Activated T-helper 2 cell treated with anti-CD3 and anti-CD28 coated beads, Interferon-gamma antibody, Interleukin-2, Interleukin-4, amounts not matched to agents 10 μg/mL and 5 μg/mL and 100 μg/mL, durations not matched to agents 14 hours and 24 hours and 36 hours (primary cell): ENCODE measurements at regions of chr12 and their contacts with region 1.

Region 1: DNA sequence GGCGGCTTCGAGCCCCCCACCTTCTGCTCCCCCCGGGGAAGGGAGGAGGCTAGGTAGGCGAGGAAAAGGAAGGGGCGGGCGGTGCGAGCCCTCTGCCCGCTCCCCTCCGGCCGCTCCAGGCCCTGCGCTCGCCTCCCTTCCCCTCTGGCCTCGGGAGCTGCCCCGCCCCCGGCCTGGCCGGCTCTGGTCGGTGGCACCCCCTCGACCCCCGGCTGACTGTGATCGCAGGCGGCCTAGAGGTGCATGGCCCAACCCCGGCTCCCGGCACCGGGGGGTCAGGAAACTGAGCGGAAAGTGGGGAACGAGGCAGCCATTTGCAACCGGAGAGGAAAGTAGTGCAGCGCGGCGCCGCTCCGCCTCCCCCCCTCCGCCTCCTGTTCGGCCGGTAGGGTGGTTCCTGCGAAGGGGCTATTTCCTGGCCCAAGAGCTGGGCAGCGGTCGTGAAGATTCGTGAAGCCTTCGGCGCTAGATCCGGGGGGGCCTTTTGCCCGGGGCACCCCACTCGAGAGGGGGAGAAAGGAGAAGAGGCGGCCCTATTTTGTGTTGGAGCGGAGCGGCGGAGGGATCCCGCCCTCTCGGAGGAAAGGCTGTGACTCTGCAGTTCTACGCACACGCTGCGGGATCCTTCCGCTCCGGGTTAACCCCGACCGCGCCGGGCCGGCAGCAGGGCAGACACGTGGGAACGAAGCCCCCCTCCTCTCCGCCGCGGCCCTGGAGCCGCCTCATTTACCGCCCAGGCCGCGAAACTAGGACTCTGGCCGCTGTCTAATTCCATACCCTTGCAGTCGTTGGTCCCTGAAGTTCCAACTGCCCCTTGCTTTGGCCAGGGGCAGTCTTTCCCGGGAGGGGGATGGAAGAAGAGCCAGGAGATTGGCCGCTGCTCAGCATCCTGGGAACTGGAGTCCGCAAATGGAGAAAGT is at the start of gene KMT2D:
- DNase-seq: peak; percentile 89
- H3K4me3 Mint-ChIP-seq: peak within 1 kb of the TSS; percentile 92
- H3K27ac Mint-ChIP-seq: peak within 1 kb of the TSS; percentile 89
- H3K4me1 Mint-ChIP-seq: peaks cover 43% of the 10 kb centered on the region
- H3K27me3 Mint-ChIP-seq: no peaks in the 10 kb centered on the region
- total RNA-seq, gene KMT2D: 93.3 and 100 TPM in 2 replicates

Region 2: DNA sequence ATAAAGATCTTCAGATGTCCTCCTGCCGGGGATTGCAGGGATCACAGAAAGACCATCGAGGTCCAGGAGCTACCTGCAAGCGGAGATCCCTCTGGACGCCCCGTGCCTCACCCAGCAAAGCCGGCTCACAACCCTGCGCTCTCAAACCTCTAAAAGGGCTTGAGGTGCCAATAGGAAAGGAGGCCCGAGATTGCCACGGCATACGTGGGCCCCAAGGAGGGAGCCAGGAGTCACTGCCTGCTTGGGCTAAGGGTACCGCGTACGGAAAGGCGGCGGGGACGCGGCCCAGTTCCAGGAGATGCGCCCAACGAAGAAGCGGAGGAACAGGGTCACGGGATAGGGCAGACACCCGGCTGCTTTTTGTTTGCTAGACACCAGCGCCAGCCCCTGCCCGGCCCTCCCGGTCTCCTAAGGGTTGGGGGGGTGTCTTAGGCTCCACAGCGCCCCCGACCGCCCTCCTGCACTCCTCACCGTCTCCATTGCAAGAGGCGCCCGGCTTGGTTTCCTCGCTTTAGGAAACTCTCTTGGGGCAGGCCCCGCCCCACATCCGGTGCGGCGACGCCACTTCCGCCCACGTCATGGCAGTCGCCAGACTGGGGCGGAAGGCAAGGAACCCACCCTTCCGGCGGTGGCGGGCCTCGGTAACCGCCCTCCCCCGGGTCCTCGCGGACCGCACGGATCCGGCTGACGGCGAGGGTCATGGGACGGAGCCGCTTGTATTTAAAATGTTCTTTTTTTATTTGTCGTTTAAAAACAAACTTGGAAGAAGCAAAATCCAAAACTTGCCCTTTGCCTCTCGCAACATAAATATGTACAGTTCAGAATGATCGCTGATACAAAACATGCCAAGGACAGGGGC is 42.0 kb before region 1 on chr12 and contains the start of gene PRKAG1:
- intact Hi-C with region 1: loop called (anchors 1 kb)
- DNase-seq: peak; percentile 96
- H3K4me3 Mint-ChIP-seq: peak within 1 kb of the TSS; percentile 90
- H3K27ac Mint-ChIP-seq: peak within 1 kb of the TSS; percentile 93
- H3K4me1 Mint-ChIP-seq: peaks cover 25% of the 10 kb centered on the region
- H3K27me3 Mint-ChIP-seq: no peaks in the 10 kb centered on the region
- total RNA-seq, gene PRKAG1: 65.1 and 65.7 TPM in 2 replicates

Region 3: DNA sequence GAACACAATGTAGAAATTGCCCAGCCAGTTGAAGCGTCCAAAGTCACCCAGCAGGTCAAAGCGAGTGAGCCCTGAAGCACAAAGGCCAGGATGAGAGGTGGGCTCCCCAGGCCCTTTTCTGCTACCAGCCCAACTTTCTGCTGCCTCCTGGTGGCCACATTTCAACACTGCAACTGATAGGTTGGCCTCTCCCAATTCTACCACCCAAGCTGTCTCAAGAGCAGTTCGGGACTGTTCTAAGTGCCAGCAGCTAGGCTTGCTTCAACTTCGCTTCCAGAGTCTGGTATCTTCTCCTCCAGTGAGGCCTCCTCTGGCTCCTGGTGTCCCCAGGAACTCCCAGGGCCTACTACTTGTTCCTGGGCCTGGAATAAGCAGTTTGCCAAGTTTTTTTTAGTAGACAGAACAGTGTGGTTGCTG is 37.5 kb after region 1 on chr12:
- intact Hi-C with region 1: loop called (anchors 1 kb)
- DNase-seq: peak; percentile 46
- H3K4me3 Mint-ChIP-seq: no peak overlapping the region
- H3K27ac Mint-ChIP-seq: no peak overlapping the region
- H3K4me1 Mint-ChIP-seq: peaks cover 6% of the 10 kb centered on the region
- H3K27me3 Mint-ChIP-seq: peaks cover 22% of the 10 kb centered on the region